ENCODE measurements at regions of chr19 and their contacts with region 1.

Region 1: DNA sequence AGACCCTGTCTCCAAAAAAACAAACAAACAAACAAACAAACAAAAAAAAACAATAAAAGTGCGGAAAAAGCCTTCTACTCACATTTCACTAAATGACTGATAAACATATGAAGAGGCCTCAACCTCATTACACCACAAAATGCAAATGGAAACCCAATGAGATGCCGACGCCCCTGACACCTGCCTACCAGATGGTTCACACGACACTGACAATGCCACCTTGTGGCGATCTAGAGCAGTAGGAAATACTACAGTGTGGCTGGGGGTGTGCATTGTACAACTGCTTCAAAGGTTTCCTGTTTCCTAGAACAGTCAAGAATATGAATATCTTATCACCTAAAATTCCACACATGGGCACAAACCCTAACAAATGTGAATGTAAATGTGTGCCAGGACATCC is 14.0 kb downstream of the SCGB2B2 start:
- DNase-seq: no peak
- ATAC-seq: no peak
- H3K4me3 ChIP-seq: no peak overlapping the region
- H3K27ac ChIP-seq: no peak overlapping the region
- H3K4me1 ChIP-seq: no peaks in the 10 kb centered on the region
- H3K27me3 ChIP-seq: no peaks in the 10 kb centered on the region

Region 2: GRCh38 chr19:34461375-34462100 is 201.4 kb before region 1 on chr19:
- intact Hi-C with region 1: no loop called
- DNase-seq: no peak
- ATAC-seq: peak; percentile 70 to 84
- H3K4me3 ChIP-seq: no peak overlapping the region
- H3K27ac ChIP-seq: peak overlapping the region; percentile 77
- H3K4me1 ChIP-seq: peaks cover 11% of the 10 kb centered on the region
- H3K27me3 ChIP-seq: no peaks in the 10 kb centered on the region

Region 3: DNA sequence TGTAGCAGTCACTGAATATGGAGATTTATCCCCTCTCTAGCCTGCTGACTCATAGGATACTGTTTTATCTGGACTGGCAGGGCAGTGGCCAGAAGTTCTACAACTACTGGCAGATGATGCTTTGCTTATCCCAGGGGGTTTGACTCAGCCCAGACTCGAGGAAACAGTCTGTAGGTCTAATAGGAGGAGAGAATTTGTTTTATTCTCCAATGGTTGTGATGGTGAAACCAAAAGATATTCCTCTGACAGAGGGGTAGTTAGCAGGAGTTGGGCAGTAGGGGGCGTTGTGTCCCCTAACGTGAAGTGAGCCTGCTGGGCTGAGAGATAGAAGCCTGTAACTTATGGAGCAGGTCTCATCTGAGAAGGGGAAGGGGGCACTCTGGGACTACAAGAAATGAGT is 106.4 kb before region 1 on chr19:
- intact Hi-C with region 1: loop called in 1 of 4 experiments (anchors 10 kb)
- DNase-seq: peak; percentile 52 to 76 (median 70)
- ATAC-seq: peak; percentile 76 to 77
- H3K4me3 ChIP-seq: no peak overlapping the region
- H3K27ac ChIP-seq: no peak overlapping the region
- H3K4me1 ChIP-seq: peaks cover 1% of the 10 kb centered on the region
- H3K27me3 ChIP-seq: no peaks in the 10 kb centered on the region

Region 4: GRCh38 chr19:34818270-34818669 is 155.4 kb after region 1 on chr19:
- intact Hi-C with region 1: no loop called
- DNase-seq: no peak
- ATAC-seq: no peak
- H3K4me3 ChIP-seq: no peak overlapping the region
- H3K27ac ChIP-seq: no peak overlapping the region
- H3K4me1 ChIP-seq: no peaks in the 10 kb centered on the region
- H3K27me3 ChIP-seq: no peaks in the 10 kb centered on the region

Measured in right cardiac atrium (tissue), 5 donors.